ENCODE measurements at regions of chr12 and their contacts with region 1.

Region 1: DNA sequence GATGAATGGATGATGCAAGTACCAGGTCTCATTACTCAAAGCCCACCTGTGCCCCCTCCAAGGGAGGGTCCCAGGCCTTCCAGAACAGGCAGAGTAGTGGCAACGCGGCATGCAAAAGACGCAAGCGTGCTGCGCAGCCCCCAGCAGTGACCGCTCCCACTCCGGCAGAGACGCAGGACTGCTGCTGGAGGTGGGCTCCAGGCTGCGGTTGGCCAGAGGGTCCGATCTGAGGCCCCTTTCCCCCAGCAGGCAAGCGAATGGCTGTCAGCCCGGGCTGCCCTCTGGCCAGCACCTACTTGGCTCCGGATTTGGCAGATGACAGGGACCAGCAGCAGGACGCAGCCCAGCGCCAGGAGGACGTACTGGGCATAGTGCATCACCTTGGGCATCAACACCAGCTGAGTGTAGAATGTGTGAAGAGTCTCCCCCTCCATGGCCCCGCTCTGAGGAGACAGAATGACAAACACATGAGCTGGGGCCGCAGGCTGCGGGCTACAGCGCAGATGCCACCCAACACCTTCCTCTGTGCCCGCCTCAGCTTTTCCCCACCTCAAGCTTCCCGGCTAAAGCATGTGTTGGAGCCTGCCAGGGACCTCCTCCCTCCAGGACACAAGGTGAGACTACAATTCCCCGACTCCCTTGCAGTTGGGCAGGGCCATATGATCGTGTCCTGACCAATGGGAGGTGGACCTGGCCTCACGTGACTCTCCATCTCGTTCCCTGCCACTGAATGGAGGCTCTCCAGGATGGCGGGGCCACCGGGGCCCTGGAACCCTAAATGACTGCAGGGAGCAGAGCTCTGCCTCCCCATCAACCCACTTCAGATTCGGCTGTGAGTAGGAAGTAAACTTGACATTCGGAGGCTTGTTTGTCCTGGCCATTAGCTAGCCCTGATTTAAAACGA is 77.4 kb downstream of the SCARB1 start:
- DNase-seq: peak; percentile 53
- H3K4me3 ChIP-seq: no peak overlapping the region
- H3K27ac ChIP-seq: no peak overlapping the region
- H3K4me1 ChIP-seq: peaks cover 3% of the 10 kb centered on the region
- H3K27me3 ChIP-seq: no peaks in the 10 kb centered on the region
- CTCF ChIP-seq: no peak

Region 2: DNA sequence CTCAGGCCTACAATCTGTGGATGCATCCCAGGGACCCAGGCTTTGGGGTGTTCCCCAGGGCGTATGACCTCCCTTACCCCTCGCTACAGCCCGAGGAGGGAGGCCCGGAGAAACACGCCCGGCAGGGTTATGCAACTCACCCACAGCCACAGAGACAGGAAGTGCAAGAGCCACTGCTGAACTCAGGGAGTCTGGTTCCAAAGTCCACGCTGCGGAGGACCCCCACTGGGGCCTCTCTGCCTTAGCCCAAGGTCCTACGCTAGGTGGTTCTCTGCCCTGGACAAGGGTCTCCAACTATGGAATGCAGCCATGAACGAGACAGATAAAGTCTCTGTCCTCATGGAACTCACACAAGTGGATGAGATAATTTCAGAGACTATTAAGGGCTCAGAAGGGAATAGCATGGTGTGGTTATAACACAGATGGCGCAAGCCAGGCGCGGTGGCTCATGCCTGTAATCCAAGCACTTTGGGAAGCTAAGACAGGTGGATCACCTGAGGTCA is 66.1 kb after region 1 on chr12:
- CTCF ChIA-PET with region 1: no interaction called
- dilution Hi-C with region 1: no loop called
- in situ Hi-C with region 1: no loop called
- intact Hi-C with region 1: no loop called
- DNase-seq: no peak
- H3K4me3 ChIP-seq: no peak overlapping the region
- H3K27ac ChIP-seq: no peak overlapping the region
- H3K4me1 ChIP-seq: peaks cover 5% of the 10 kb centered on the region
- H3K27me3 ChIP-seq: no peaks in the 10 kb centered on the region
- CTCF ChIP-seq: no peak

Region 3: GRCh38 chr12:124869034-124869665 is 82.8 kb after region 1 on chr12:
- CTCF ChIA-PET with region 1: no interaction called
- dilution Hi-C with region 1: loop called (anchors 5 kb)
- in situ Hi-C with region 1: no loop called
- intact Hi-C with region 1: no loop called
- DNase-seq: peak; percentile 23
- H3K4me3 ChIP-seq: no peak overlapping the region
- H3K27ac ChIP-seq: no peak overlapping the region
- H3K4me1 ChIP-seq: peaks cover 3% of the 10 kb centered on the region
- H3K27me3 ChIP-seq: no peaks in the 10 kb centered on the region
- CTCF ChIP-seq: no peak

Region 4: DNA sequence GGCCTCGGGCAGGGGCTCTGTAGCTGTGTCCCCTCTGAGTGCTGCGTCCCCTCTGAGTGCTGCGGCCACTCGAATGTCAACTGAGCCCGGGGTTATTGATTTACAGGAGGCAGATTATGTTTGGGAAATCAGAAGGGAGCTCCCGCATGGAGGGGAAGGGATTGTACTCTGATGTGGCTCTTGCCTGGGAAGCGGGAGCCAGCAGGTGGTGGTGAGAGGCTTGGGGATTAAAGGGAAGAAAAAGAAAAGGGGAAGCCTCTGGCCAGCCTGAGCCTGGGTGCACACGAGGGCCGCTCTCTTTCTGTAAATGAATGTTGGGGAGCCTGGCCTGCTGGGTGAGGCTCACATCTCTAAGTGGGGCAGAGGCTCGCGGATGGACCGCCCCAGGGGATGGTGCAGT is 422.6 kb after region 1 on chr12:
- CTCF ChIA-PET with region 1: no interaction called
- dilution Hi-C with region 1: no loop called
- in situ Hi-C with region 1: no loop called
- intact Hi-C with region 1: no loop called
- DNase-seq: no peak
- H3K4me3 ChIP-seq: no peak overlapping the region
- H3K27ac ChIP-seq: no peak overlapping the region
- H3K4me1 ChIP-seq: no peaks in the 10 kb centered on the region
- H3K27me3 ChIP-seq: no peaks in the 10 kb centered on the region
- CTCF ChIP-seq: no peak

Measured in mammary epithelial cell (primary cell).